Activated naive CD4-positive, alpha-beta T cell treated with anti-CD3 and anti-CD28 coated beads for 36 hours (primary cell): ENCODE measurements at regions of chr10 and their contacts with region 1.

Region 1: GRCh38 chr10:11276449-11276990 is 258.8 kb downstream of the CELF2 start:
- DNase-seq: no peak
- H3K4me3 Mint-ChIP-seq: no peak overlapping the region
- H3K27ac Mint-ChIP-seq: peak overlapping the region; percentile 50
- H3K4me1 Mint-ChIP-seq: peaks cover 44% of the 10 kb centered on the region
- H3K27me3 Mint-ChIP-seq: no peaks in the 10 kb centered on the region

Region 2: GRCh38 chr10:10855151-10855581 is 421.4 kb before region 1 on chr10:
- CTCF ChIA-PET with region 1: no interaction called
- intact Hi-C with region 1: loop called (anchors 5 kb)
- DNase-seq: peak; percentile 8
- H3K4me3 Mint-ChIP-seq: no peak overlapping the region
- H3K27ac Mint-ChIP-seq: no peak overlapping the region
- H3K4me1 Mint-ChIP-seq: no peaks in the 10 kb centered on the region
- H3K27me3 Mint-ChIP-seq: peaks cover 16% of the 10 kb centered on the region